ENCODE measurements at regions of chr12 and their contacts with region 1.

Region 1: GRCh38 chr12:132908145-132909044 is 21.0 kb upstream of the CHFR start:
- DNase-seq: peak; percentile 93 to 99 (median 96)
- H3K4me3 ChIP-seq: peak overlapping the region; percentile 57 to 59
- H3K4me3 Mint-ChIP-seq: peak overlapping the region; percentile 91 to 98 (median 96)
- H3K27ac ChIP-seq: peak overlapping the region; percentile 75
- H3K27ac Mint-ChIP-seq: peak overlapping the region; percentile 95 to 100 (median 98)
- H3K4me1 ChIP-seq: peaks cover 11% of the 10 kb centered on the region
- H3K4me1 Mint-ChIP-seq: peaks cover 3 to 27% (median 16%) of the 10 kb centered on the region in 4 donors
- H3K27me3 ChIP-seq: no peaks in the 10 kb centered on the region
- H3K27me3 Mint-ChIP-seq: peaks cover 0 to 2% of the 10 kb centered on the region in 2 donors

Region 2: GRCh38 chr12:132083941-132084620 is 824.3 kb before region 1 on chr12:
- CTCF ChIA-PET with region 1: no interaction called
- POLR2A ChIA-PET with region 1: no interaction called
- intact Hi-C with region 1: no loop called
- DNase-seq: peak; percentile 85 to 87 (median 87)
- H3K4me3 ChIP-seq: peak overlapping the region; percentile 42 to 66
- H3K4me3 Mint-ChIP-seq: peak overlapping the region; percentile 82 to 94 (median 91)
- H3K27ac ChIP-seq: peak overlapping the region; percentile 71
- H3K27ac Mint-ChIP-seq: peak overlapping the region; percentile 79 to 94 (median 91)
- H3K4me1 ChIP-seq: peaks cover 19% of the 10 kb centered on the region
- H3K4me1 Mint-ChIP-seq: peaks cover 22 to 33% (median 28%) of the 10 kb centered on the region in 4 donors
- H3K27me3 ChIP-seq: no peaks in the 10 kb centered on the region
- H3K27me3 Mint-ChIP-seq: no peaks in the 10 kb centered on the region

Region 3: DNA sequence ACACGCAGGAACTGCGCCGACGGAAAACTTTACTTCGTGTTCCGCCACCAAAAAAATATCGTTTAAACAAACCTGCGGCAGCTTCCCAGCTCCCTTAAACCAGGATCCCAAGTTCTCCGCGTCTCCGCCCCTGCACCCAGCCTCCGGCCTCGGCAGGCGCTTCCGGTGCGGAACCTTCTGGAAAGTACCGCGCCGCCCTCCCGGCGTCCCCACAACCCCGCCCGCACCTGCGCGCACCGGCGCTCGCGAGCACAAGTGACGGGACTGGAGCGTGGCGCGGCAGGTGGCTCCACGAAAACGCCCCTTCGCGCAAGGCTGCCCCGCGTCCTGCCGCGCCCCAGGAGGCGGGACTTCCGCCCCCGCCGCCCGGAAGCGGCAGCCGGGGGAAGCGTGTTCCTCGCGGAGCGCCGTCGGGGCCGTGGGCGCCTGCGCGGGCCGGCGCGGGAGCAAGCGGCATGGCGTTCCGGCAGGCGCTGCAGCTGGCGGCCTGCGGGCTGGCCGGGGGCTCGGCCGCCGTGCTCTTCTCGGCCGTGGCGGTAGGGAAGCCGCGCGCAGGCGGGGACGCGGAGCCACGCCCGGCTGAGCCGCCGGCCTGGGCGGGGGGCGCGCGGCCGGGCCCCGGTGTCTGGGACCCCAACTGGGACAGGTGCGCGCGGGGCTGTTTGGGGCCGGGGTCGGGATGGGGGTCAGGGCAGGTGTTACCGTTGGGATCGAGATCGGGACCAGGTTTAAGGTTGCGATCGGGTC is 197.8 kb before region 1 on chr12 and contains the start of gene PGAM5:
- CTCF ChIA-PET with region 1: no interaction called
- POLR2A ChIA-PET with region 1: interaction called, 3 read pairs
- intact Hi-C with region 1: loop called (anchors 1 kb)
- DNase-seq: peak; percentile 95 to 97 (median 96)
- H3K4me3 ChIP-seq: peak within 1 kb of the TSS; percentile 48 to 70
- H3K4me3 Mint-ChIP-seq: peak within 1 kb of the TSS; percentile 88 to 90 (median 90)
- H3K27ac ChIP-seq: peak within 1 kb of the TSS; percentile 91
- H3K27ac Mint-ChIP-seq: peak within 1 kb of the TSS; percentile 92 to 95 (median 94)
- H3K4me1 ChIP-seq: peaks cover 28% of the 10 kb centered on the region
- H3K4me1 Mint-ChIP-seq: peaks cover 8 to 33% (median 19%) of the 10 kb centered on the region in 4 donors
- H3K27me3 ChIP-seq: no peaks in the 10 kb centered on the region
- H3K27me3 Mint-ChIP-seq: no peaks in the 10 kb centered on the region
- total RNA-seq, gene PGAM5: 23.8 to 28.1 TPM

Region 4: DNA sequence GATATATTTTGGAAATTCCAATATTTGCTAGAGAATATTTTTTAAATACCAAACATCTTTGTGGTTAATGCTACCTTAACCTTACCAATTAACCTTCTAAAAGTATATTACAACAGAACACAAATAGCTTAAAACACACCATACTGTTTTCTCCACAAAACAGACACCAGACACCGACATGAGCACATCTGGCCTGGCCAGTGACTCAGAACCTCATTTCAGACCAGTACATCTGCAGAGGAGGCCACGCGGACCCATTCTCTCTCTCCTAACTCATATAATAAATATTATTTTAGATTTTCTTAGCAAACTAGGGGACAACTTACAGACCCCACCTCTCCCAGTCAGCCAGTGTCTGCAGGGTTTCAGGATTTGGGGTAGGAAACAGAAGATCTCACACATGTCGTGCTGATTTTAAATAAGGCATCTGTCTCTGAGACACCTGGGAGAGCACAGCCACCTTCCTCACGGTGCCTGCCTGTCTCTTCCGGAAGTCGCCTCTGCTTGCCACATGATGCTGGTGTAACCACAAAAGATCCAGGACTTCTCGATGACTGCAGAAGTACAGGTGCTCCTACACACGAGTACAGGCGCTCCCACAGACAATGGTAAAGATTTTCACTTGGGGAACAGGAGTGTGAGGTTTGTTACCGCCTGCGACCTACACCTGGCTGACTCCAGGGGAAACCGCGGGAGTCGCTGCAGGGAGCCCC is 137.1 kb before region 1 on chr12:
- CTCF ChIA-PET with region 1: interaction called, 45 read pairs
- POLR2A ChIA-PET with region 1: interaction called, 4 read pairs
- intact Hi-C with region 1: loop called (anchors 1 kb)
- DNase-seq: peak; percentile 21 to 78 (median 58)
- H3K4me3 ChIP-seq: no peak overlapping the region
- H3K4me3 Mint-ChIP-seq: peak overlapping the region in 6 of 8 donors; percentile 17 to 75 (median 47)
- H3K27ac ChIP-seq: peak overlapping the region; percentile 25
- H3K27ac Mint-ChIP-seq: peak overlapping the region; percentile 64 to 96 (median 78)
- H3K4me1 ChIP-seq: peaks cover 16% of the 10 kb centered on the region
- H3K4me1 Mint-ChIP-seq: peaks cover 12 to 40% (median 22%) of the 10 kb centered on the region in 4 donors
- H3K27me3 ChIP-seq: no peaks in the 10 kb centered on the region
- H3K27me3 Mint-ChIP-seq: no peaks in the 10 kb centered on the region

Region 5: DNA sequence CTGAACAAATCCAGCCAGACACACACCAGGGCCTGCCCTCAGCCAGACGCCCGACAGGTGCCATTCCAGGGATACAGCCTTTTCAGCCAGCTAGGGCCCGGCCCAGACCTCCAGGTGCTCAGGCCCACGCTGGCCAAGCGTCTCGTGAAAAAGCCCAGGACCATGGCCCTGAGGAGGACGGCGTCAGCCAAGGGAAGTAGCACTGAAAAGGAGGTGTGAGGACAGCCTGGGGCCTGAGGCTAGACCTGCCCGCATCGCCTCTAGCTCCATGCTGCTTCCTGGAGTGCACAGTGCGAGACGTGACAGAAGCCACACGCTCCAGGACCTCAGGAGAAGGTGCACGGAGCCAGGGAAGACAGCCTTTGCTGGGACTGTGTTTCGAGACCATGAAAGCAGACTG is 109.6 kb before region 1 on chr12:
- CTCF ChIA-PET with region 1: no interaction called
- POLR2A ChIA-PET with region 1: no interaction called
- intact Hi-C with region 1: no loop called
- DNase-seq: no peak
- H3K4me3 ChIP-seq: no peak overlapping the region
- H3K4me3 Mint-ChIP-seq: no peak overlapping the region
- H3K27ac ChIP-seq: no peak overlapping the region
- H3K27ac Mint-ChIP-seq: no peak overlapping the region
- H3K4me1 ChIP-seq: no peaks in the 10 kb centered on the region
- H3K4me1 Mint-ChIP-seq: no peaks in the 10 kb centered on the region
- H3K27me3 ChIP-seq: no peaks in the 10 kb centered on the region
- H3K27me3 Mint-ChIP-seq: no peaks in the 10 kb centered on the region

Region 6: DNA sequence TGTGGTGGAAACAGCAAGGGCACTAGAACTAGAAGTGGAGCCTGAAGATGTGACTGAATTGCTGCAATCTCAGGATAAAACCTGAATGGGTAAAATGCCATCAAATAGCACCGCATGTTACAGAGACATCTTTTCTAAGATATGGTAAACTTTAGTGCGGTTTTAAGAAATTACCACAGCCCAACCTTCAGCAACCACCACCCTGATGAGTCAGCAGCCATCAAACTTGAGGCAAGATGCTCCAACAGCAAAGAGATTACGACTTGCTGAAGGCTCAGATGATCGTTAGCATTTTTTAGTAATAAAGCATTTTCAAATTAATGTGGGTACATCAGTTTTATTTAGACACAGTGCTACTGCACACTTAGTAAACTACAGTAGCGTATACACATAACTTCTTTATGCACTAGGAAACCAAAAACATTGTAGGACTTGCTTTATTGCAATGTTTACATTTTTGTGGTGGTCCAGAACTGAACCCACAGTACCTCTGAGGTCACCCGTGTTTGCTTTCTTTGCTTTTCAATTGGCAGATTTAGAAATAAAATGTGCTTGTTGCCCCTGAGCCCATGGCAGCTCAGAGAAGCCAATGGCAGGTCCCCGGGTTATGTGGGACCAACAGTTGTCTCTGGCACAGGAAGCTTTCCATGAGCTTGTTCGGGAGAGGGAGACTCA is 95.6 kb before region 1 on chr12:
- CTCF ChIA-PET with region 1: no interaction called
- POLR2A ChIA-PET with region 1: no interaction called
- intact Hi-C with region 1: no loop called
- DNase-seq: peak in 3 of 5 donors; percentile 13 to 15 (median 14)
- H3K4me3 ChIP-seq: no peak overlapping the region
- H3K4me3 Mint-ChIP-seq: no peak overlapping the region
- H3K27ac ChIP-seq: no peak overlapping the region
- H3K27ac Mint-ChIP-seq: peak overlapping the region in 4 of 7 donors; percentile 5 to 77 (median 38)
- H3K4me1 ChIP-seq: no peaks in the 10 kb centered on the region
- H3K4me1 Mint-ChIP-seq: peaks cover 4 to 12% (median 10%) of the 10 kb centered on the region in 4 donors
- H3K27me3 ChIP-seq: no peaks in the 10 kb centered on the region
- H3K27me3 Mint-ChIP-seq: no peaks in the 10 kb centered on the region

Region 7: DNA sequence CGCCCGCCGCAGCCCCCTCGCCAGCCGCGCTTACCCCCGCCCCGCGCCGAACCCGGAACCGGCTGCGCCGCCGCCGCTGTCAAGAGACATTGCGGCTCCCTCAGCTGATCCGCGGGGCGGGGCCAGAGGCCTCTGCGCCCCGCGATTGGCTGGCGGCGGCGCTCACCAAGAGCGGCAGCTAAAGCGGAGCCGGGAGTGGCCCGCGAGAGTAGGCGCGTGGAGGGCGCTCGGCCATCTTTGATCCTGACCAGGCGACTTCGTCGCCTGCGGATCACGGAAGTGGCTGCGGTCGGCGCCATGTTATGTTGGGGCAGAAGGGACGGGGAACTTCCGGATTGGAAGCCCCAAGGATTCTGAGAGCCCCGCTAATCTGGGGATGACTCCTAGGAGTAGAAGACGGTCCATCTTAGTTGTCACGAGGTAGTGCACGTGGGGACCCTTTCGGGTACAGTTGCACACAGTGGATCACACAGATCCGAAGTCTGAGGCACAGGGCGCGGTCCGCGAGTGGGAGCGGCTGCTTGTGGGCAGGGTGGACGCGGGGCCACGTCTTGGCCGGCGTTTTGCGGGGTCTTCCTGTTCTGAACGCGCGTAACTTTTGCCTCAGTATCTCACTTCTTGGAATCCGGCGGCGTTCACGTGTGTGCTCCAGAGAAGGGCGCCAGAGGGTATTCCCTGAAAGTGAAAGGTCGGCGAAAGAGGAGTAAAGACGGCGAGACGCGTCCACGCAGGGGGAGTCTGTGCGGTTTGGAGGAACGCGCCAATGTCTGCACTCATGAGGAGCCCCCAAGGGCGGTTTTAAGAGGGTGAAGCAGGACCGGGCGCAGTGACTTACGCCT is 20.7 kb before region 1 on chr12 and contains the start of gene CHFR:
- CTCF ChIA-PET with region 1: interaction called, 5 read pairs
- POLR2A ChIA-PET with region 1: interaction called, 16 read pairs
- intact Hi-C with region 1: loop called (anchors 1 kb)
- DNase-seq: peak; percentile 93 to 97 (median 96)
- H3K4me3 ChIP-seq: peak within 1 kb of the TSS; percentile 80 to 95
- H3K4me3 Mint-ChIP-seq: peak within 1 kb of the TSS; percentile 95 to 99 (median 98)
- H3K27ac ChIP-seq: peak within 1 kb of the TSS; percentile 97
- H3K27ac Mint-ChIP-seq: peak within 1 kb of the TSS; percentile 99 to 100 (median 100)
- H3K4me1 ChIP-seq: peaks cover 24% of the 10 kb centered on the region
- H3K4me1 Mint-ChIP-seq: peaks cover 12 to 37% (median 25%) of the 10 kb centered on the region in 4 donors
- H3K27me3 ChIP-seq: no peaks in the 10 kb centered on the region
- H3K27me3 Mint-ChIP-seq: no peaks in the 10 kb centered on the region
- total RNA-seq, gene CHFR: 67.6 to 79.4 TPM

Region 8: GRCh38 chr12:132986001-132986912 is 77.9 kb after region 1 on chr12 and contains the start of gene ZNF26:
- CTCF ChIA-PET with region 1: no interaction called
- POLR2A ChIA-PET with region 1: interaction called, 19 read pairs
- intact Hi-C with region 1: loop called (anchors 1 kb)
- DNase-seq: peak; percentile 85 to 90 (median 86)
- H3K4me3 ChIP-seq: peak within 1 kb of the TSS; percentile 58 to 64
- H3K4me3 Mint-ChIP-seq: peak within 1 kb of the TSS; percentile 92 to 98 (median 95)
- H3K27ac ChIP-seq: peak within 1 kb of the TSS; percentile 77
- H3K27ac Mint-ChIP-seq: peak within 1 kb of the TSS; percentile 95 to 97 (median 97)
- H3K4me1 ChIP-seq: peaks cover 22% of the 10 kb centered on the region
- H3K4me1 Mint-ChIP-seq: peaks cover 24 to 48% (median 33%) of the 10 kb centered on the region in 4 donors
- H3K27me3 ChIP-seq: no peaks in the 10 kb centered on the region
- H3K27me3 Mint-ChIP-seq: peaks cover 0 to 3% of the 10 kb centered on the region in 2 donors
- total RNA-seq, gene ZNF26: 25.9 to 28.2 TPM

Region 9: GRCh38 chr12:133080368-133081158 is 172.2 kb after region 1 on chr12 and contains the start of gene ZNF140:
- CTCF ChIA-PET with region 1: interaction called, 4 read pairs
- POLR2A ChIA-PET with region 1: interaction called, 9 read pairs
- intact Hi-C with region 1: loop called (anchors 1 kb)
- DNase-seq: peak; percentile 95 to 98 (median 97)
- H3K4me3 ChIP-seq: peak within 1 kb of the TSS; percentile 59 to 76
- H3K4me3 Mint-ChIP-seq: peak within 1 kb of the TSS in 1 of 8 donors; percentile 17
- H3K27ac ChIP-seq: peak within 1 kb of the TSS; percentile 100
- H3K27ac Mint-ChIP-seq: no peak within 1 kb of the TSS
- H3K4me1 ChIP-seq: peaks cover 13% of the 10 kb centered on the region
- H3K4me1 Mint-ChIP-seq: peaks cover 0 to 10% (median 5%) of the 10 kb centered on the region in 4 donors
- H3K27me3 ChIP-seq: no peaks in the 10 kb centered on the region
- H3K27me3 Mint-ChIP-seq: no peaks in the 10 kb centered on the region
- total RNA-seq, gene ZNF140: 25.2 to 28.2 TPM

Region 10: DNA sequence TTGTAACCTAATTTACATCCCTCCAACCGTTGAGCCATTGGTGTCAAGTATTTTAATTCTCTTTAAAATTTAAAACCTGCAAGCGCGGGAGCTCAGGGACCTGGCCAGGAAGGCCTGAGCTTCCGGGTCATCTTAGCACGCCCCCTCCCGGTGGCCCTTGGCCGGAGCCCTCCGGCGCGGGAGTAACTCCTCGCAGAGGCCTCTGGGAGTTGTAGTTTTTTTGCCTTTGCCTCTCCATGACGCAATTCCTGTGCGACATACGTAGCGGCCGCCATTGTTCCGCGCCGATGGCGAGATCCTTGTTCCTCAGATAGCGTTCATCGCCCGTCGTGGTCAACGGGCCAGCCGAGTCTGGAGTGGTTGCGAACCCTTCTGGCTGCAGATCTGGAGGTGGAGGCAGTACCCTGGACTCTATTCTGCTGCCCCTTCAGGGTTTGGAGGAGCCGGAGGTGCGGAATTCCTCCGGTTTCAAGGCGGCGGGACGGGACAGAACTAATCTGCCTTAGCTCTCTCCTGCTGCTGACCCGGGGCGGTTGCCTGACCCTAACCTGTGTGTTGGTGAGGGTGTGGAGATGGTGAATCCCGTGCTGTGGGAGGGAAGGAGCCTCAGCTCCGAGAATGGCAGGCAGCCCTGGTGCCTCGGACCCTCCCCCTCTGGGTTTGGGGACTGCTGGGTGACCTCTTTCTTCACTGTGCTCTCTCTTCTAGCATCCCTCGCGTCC is 273.0 kb after region 1 on chr12 and contains the start of gene ZNF268:
- CTCF ChIA-PET with region 1: interaction called, 4 read pairs
- POLR2A ChIA-PET with region 1: interaction called, 4 read pairs
- intact Hi-C with region 1: loop called (anchors 1 kb)
- DNase-seq: peak; percentile 84 to 89 (median 85)
- H3K4me3 ChIP-seq: peak within 1 kb of the TSS; percentile 96 to 100
- H3K4me3 Mint-ChIP-seq: peak within 1 kb of the TSS; percentile 89 to 97 (median 94)
- H3K27ac ChIP-seq: peak within 1 kb of the TSS; percentile 73
- H3K27ac Mint-ChIP-seq: peak within 1 kb of the TSS; percentile 91 to 98 (median 96)
- H3K4me1 ChIP-seq: peaks cover 10% of the 10 kb centered on the region
- H3K4me1 Mint-ChIP-seq: peaks cover 19 to 34% (median 23%) of the 10 kb centered on the region in 4 donors
- H3K27me3 ChIP-seq: no peaks in the 10 kb centered on the region
- H3K27me3 Mint-ChIP-seq: no peaks in the 10 kb centered on the region
- total RNA-seq, gene ZNF268: 34.9 to 39.6 TPM